ENCODE measurements at regions of chr12 and their contacts with region 1.

Region 1: DNA sequence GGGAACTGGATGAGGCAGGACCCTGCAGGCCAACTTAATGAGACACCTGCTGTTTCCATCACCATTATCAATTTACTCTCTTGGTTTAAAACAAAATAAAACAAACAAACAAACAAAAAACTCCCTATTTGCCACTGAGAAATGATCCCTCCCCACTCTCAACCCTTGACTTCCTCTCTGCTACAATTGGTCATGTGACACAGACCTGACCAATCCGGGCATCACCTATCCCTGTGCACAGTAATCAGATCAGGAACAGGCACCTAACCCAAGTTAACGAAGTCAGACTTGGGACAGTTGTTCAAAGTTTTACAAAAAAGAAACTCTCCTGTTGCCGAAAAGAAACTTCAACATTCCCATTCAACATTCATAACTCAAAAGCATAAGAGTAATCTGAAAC is 58.4 kb downstream of the NELL2 start:
- DNase-seq: peak in 1 of 9 experiments; percentile 42
- ATAC-seq: no peak
- H3K4me3 ChIP-seq: no peak overlapping the region
- H3K4me3 Mint-ChIP-seq: no peak overlapping the region
- H3K27ac ChIP-seq: peak overlapping the region in 1 of 2 experiments; percentile 2
- H3K27ac Mint-ChIP-seq: peak overlapping the region; percentile 80
- H3K4me1 ChIP-seq: peaks cover 79% of the 10 kb centered on the region
- H3K4me1 Mint-ChIP-seq: peaks cover 77% of the 10 kb centered on the region
- H3K27me3 ChIP-seq: no peaks in the 10 kb centered on the region
- H3K27me3 Mint-ChIP-seq: no peaks in the 10 kb centered on the region
- CTCF ChIP-seq: no peak

Region 2: GRCh38 chr12:44647917-44648690 is 169.6 kb before region 1 on chr12:
- CTCF ChIA-PET with region 1: no interaction called
- POLR2A ChIA-PET with region 1: no interaction called
- intact Hi-C with region 1: no loop called
- DNase-seq: no peak
- ATAC-seq: no peak
- H3K4me3 ChIP-seq: no peak overlapping the region
- H3K4me3 Mint-ChIP-seq: no peak overlapping the region
- H3K27ac ChIP-seq: no peak overlapping the region
- H3K27ac Mint-ChIP-seq: peak overlapping the region; percentile 35
- H3K4me1 ChIP-seq: peaks cover 4% of the 10 kb centered on the region
- H3K4me1 Mint-ChIP-seq: peaks cover 33% of the 10 kb centered on the region
- H3K27me3 ChIP-seq: no peaks in the 10 kb centered on the region
- H3K27me3 Mint-ChIP-seq: no peaks in the 10 kb centered on the region
- CTCF ChIP-seq: no peak

Region 3: GRCh38 chr12:44835641-44836379 is 18.1 kb after region 1 on chr12:
- CTCF ChIA-PET with region 1: interaction called, 10 read pairs
- POLR2A ChIA-PET with region 1: interaction called, 9 read pairs
- intact Hi-C with region 1: loop called in 1 of 2 experiments (anchors 2 kb)
- DNase-seq: peak in 4 of 9 experiments; percentile 31 to 62 (median 39)
- ATAC-seq: peak; percentile 87
- H3K4me3 ChIP-seq: peak overlapping the region; percentile 12 to 20
- H3K4me3 Mint-ChIP-seq: peak overlapping the region; percentile 73
- H3K27ac ChIP-seq: peak overlapping the region; percentile 42 to 57
- H3K27ac Mint-ChIP-seq: peak overlapping the region; percentile 94
- H3K4me1 ChIP-seq: peaks cover 90% of the 10 kb centered on the region
- H3K4me1 Mint-ChIP-seq: peaks cover 93% of the 10 kb centered on the region
- H3K27me3 ChIP-seq: no peaks in the 10 kb centered on the region
- H3K27me3 Mint-ChIP-seq: no peaks in the 10 kb centered on the region
- CTCF ChIP-seq: no peak

Region 4: DNA sequence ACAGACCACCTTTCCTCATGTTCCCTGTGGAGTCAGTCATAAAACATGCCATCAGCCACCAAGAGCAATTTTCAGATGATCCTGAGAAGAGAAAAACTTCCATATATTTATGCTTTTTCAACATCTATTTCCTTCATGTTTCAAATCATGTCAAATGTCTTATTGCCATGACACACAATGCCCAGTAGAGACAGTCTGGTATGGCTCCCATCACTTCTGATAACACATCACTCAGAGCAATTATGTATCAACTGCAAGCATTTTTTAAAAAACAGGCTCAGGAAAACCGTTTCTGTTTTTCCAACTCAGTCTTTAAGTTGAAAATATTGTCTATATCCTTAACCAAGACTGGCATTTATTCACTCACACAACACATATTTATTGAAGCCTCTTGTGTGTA is 682.5 kb after region 1 on chr12:
- CTCF ChIA-PET with region 1: no interaction called
- POLR2A ChIA-PET with region 1: no interaction called
- intact Hi-C with region 1: no loop called
- DNase-seq: no peak
- ATAC-seq: no peak
- H3K4me3 ChIP-seq: no peak overlapping the region
- H3K4me3 Mint-ChIP-seq: no peak overlapping the region
- H3K27ac ChIP-seq: no peak overlapping the region
- H3K27ac Mint-ChIP-seq: no peak overlapping the region
- H3K4me1 ChIP-seq: no peaks in the 10 kb centered on the region
- H3K4me1 Mint-ChIP-seq: no peaks in the 10 kb centered on the region
- H3K27me3 ChIP-seq: no peaks in the 10 kb centered on the region
- H3K27me3 Mint-ChIP-seq: peaks cover 2% of the 10 kb centered on the region
- CTCF ChIP-seq: no peak

Measured in CD8-positive, alpha-beta T cell (primary cell).